PC-9 (cell line): ENCODE measurements at regions of chr17 and their contacts with region 1.

Region 1: GRCh38 chr17:8357910-8358309 is 18.3 kb downstream of the ODF4 start:
- DNase-seq: no peak
- H3K4me3 ChIP-seq: no peak overlapping the region
- H3K27ac ChIP-seq: no peak overlapping the region
- H3K4me1 ChIP-seq: no peaks in the 10 kb centered on the region
- H3K27me3 ChIP-seq: no peaks in the 10 kb centered on the region
- CTCF ChIP-seq: no peak

Region 2: DNA sequence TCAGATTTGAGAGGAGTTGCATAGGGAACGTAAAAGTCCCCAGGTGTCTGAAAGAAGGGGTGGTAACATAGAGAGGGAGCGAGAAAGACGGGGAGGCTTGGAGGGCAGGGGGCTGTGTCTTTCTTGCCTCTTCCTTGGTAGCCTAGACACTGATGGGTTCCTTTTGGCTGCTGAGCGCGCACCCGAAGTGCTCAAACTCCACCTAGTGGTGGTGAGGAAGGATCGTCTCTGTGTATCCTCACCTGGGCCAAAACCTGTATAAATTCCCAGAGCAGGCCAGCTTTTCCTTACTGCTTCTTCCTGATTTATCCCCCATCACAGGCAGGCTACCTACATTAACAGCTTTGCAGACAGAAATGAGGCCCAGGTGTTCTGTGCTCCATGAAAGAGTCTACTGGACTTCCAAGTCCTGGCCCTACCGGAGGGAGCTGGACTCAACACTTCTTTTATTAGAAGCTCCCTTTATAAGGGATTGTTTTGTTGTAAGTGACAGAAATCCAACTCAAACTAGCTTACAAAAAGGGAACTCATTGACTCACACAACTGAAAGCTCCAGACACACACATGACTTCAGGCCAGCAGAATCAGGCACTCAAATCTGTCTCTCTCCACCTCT is 57.2 kb before region 1 on chr17:
- CTCF ChIA-PET with region 1: no interaction called
- POLR2A ChIA-PET with region 1: no interaction called
- intact Hi-C with region 1: no loop called
- DNase-seq: peak; percentile 42 to 58
- H3K4me3 ChIP-seq: no peak overlapping the region
- H3K27ac ChIP-seq: no peak overlapping the region
- H3K4me1 ChIP-seq: no peaks in the 10 kb centered on the region
- H3K27me3 ChIP-seq: no peaks in the 10 kb centered on the region
- CTCF ChIP-seq: peak; percentile 82

Region 3: DNA sequence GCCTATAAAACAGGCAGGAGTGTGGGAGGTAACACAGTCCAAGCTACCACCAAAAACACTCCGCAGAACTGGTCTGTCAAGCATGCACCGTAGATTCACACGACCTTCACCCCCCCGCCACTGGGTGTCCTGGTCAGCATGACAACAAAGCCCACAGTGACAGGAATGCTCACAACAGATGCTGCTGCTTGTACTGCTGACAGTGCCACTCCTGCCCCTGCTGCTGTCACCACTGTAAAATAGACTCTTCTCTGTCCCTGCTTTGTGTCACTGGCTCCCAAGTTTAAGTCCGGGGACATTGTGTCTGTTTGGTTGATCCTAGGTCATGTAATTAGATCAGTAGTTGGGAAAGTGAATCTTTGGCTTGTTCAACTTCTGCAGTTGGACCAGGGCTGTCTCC is 25.2 kb before region 1 on chr17:
- CTCF ChIA-PET with region 1: no interaction called
- POLR2A ChIA-PET with region 1: interaction called, 10 read pairs
- intact Hi-C with region 1: no loop called
- DNase-seq: no peak
- H3K4me3 ChIP-seq: no peak overlapping the region
- H3K27ac ChIP-seq: no peak overlapping the region
- H3K4me1 ChIP-seq: no peaks in the 10 kb centered on the region
- H3K27me3 ChIP-seq: no peaks in the 10 kb centered on the region
- CTCF ChIP-seq: no peak

Region 4: DNA sequence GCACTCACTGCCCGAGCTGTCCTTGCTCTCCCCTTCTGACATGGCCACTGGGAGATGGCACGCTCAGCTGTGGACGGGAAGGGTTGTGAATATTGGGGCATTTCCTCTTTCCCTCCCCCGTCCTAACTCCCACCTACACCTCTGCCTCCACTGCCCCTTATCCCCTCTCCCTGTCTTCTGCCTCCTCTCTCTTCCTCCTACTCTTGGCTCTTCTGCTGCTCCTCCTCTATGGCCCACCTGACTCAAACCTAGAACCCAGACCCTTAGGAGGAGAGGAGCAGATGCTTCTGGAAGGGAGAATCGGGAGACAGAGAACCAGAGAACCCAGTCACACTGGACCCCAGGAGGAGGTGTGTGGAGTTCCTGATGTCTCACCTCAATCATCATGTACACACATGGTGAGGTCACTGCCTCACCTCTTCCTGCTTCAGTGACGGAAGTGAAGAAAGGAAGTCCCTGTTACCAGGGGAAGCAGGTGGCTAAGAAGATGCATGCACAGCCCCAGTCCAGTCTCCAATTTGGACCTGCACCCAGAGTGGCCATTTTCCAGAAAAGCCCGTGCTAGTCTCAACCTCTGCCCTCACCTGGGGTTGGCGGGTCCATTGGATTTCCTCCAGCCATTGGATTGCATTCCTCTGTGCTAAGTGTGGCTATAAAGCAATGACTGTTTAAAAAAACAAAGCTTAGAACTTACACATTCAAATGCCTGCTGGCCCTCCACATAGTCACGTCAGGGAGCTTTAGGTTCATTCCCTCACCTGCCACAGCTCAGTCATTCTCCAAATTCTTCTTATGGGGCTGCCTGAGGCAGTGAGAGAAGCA is 35.7 kb after region 1 on chr17:
- CTCF ChIA-PET with region 1: no interaction called
- POLR2A ChIA-PET with region 1: no interaction called
- intact Hi-C with region 1: no loop called
- DNase-seq: peak; percentile 50 to 83
- H3K4me3 ChIP-seq: no peak overlapping the region
- H3K27ac ChIP-seq: peak overlapping the region; percentile 53
- H3K4me1 ChIP-seq: peaks cover 34% of the 10 kb centered on the region
- H3K27me3 ChIP-seq: no peaks in the 10 kb centered on the region
- CTCF ChIP-seq: no peak

Region 5: DNA sequence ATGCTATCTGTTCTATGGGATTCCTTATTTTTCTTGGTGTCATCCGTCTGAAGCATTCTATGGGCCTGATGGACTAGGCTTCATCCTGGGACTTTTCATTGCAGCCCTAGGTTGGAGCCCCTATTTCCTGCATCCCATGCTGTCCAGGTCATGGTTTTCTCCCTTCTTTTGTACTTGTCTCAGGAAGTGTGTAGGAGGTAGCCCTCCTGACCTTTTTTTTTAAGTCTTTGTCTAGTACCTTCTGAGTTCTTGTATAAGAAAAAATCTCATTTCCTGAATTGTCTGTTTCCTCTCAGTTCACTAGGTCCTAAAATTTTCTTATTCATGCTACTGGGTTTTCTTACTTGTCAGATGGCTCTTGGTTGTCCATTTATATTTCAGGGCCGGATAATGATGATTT is 83.8 kb after region 1 on chr17:
- CTCF ChIA-PET with region 1: no interaction called
- POLR2A ChIA-PET with region 1: no interaction called
- intact Hi-C with region 1: no loop called
- DNase-seq: no peak
- H3K4me3 ChIP-seq: no peak overlapping the region
- H3K27ac ChIP-seq: no peak overlapping the region
- H3K4me1 ChIP-seq: peaks cover 9% of the 10 kb centered on the region; the same call in 1 of the 2 replicates
- H3K27me3 ChIP-seq: no peaks in the 10 kb centered on the region
- CTCF ChIP-seq: no peak